ENCODE measurements at regions of chr6 and their contacts with region 1.

Region 1: DNA sequence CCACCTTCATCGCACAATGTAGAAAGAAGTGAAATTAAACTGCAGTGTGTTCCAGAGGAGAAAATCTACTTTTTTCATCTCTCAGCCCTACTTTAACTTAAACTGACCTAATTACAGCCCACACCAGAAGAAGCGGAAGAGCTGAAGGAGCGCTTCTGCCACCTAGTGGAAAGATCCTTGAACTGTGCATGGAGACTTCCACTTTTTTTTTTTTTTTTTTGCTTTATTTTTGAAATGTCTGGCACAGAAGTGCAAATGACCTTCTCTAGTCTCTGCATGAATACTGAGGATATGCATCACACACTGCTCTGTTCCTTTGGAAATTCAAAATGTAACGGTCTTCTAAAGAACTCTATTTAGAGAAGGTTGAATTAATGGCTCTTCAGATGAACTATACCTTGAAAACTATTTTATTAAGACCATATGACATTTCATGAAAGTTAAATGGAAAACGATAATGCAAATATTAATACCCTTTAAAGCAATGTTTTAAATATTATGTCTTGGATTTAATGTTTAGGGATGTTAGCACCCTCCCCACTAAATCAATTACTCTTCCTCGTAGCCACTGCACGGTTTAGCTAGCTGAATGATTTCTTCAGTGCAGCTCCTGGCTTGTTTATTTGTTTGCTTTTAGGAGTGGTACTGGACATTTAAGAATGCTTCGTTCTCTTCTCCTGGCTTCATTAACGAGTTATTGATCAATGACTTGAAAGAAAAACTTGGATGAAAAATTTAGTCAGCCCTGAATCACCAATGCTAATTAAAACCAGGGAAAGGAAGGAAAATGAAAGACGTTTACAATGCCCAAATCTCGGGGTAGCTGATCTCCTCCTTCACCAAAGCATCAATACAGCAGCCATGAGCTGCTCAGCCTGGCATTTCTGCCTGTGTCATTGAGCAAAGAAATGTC is 569.6 kb upstream of the GJE1 start:
- DNase-seq: peak; percentile 66 to 77 (median 74)
- H3K4me3 ChIP-seq: peak overlapping the region; percentile 7 to 56
- H3K4me3 Mint-ChIP-seq: peak overlapping the region; percentile 77 to 94 (median 88)
- H3K27ac ChIP-seq: no peak overlapping the region
- H3K27ac Mint-ChIP-seq: peak overlapping the region; percentile 0 to 95 (median 76)
- H3K4me1 ChIP-seq: peaks cover 5% of the 10 kb centered on the region
- H3K4me1 Mint-ChIP-seq: peaks cover 4 to 16% (median 12%) of the 10 kb centered on the region in 4 donors
- H3K27me3 ChIP-seq: no peaks in the 10 kb centered on the region
- H3K27me3 Mint-ChIP-seq: peaks cover 0 to 2% of the 10 kb centered on the region in 2 donors

Region 2: GRCh38 chr6:139881728-139882211 is 1681.3 kb before region 1 on chr6:
- CTCF ChIA-PET with region 1: no interaction called
- POLR2A ChIA-PET with region 1: no interaction called
- intact Hi-C with region 1: loop called (anchors 5 kb)
- DNase-seq: peak in 3 of 5 donors; percentile 8 to 21 (median 19)
- H3K4me3 ChIP-seq: no peak overlapping the region
- H3K4me3 Mint-ChIP-seq: no peak overlapping the region
- H3K27ac ChIP-seq: no peak overlapping the region
- H3K27ac Mint-ChIP-seq: no peak overlapping the region
- H3K4me1 ChIP-seq: no peaks in the 10 kb centered on the region
- H3K4me1 Mint-ChIP-seq: peaks cover 0 to 2% (median 0%) of the 10 kb centered on the region in 4 donors
- H3K27me3 ChIP-seq: no peaks in the 10 kb centered on the region
- H3K27me3 Mint-ChIP-seq: no peaks in the 10 kb centered on the region

Region 3: GRCh38 chr6:141229296-141229695 is 333.8 kb before region 1 on chr6:
- CTCF ChIA-PET with region 1: no interaction called
- POLR2A ChIA-PET with region 1: no interaction called
- intact Hi-C with region 1: no loop called
- DNase-seq: no peak
- H3K4me3 ChIP-seq: no peak overlapping the region
- H3K4me3 Mint-ChIP-seq: no peak overlapping the region
- H3K27ac ChIP-seq: no peak overlapping the region
- H3K27ac Mint-ChIP-seq: no peak overlapping the region
- H3K4me1 ChIP-seq: no peaks in the 10 kb centered on the region
- H3K4me1 Mint-ChIP-seq: no peaks in the 10 kb centered on the region
- H3K27me3 ChIP-seq: no peaks in the 10 kb centered on the region
- H3K27me3 Mint-ChIP-seq: peaks cover 0 to 1% of the 10 kb centered on the region in 2 donors

Region 4: GRCh38 chr6:141309295-141309694 is 253.8 kb before region 1 on chr6:
- CTCF ChIA-PET with region 1: no interaction called
- POLR2A ChIA-PET with region 1: no interaction called
- intact Hi-C with region 1: loop called (anchors 1 kb)
- DNase-seq: no peak
- H3K4me3 ChIP-seq: no peak overlapping the region
- H3K4me3 Mint-ChIP-seq: no peak overlapping the region
- H3K27ac ChIP-seq: no peak overlapping the region
- H3K27ac Mint-ChIP-seq: no peak overlapping the region
- H3K4me1 ChIP-seq: no peaks in the 10 kb centered on the region
- H3K4me1 Mint-ChIP-seq: no peaks in the 10 kb centered on the region
- H3K27me3 ChIP-seq: no peaks in the 10 kb centered on the region
- H3K27me3 Mint-ChIP-seq: peaks cover 0 to 2% of the 10 kb centered on the region in 2 donors

Region 5: GRCh38 chr6:141610736-141611135 is 47.6 kb after region 1 on chr6:
- CTCF ChIA-PET with region 1: no interaction called
- POLR2A ChIA-PET with region 1: no interaction called
- intact Hi-C with region 1: no loop called
- DNase-seq: no peak
- H3K4me3 ChIP-seq: no peak overlapping the region
- H3K4me3 Mint-ChIP-seq: no peak overlapping the region
- H3K27ac ChIP-seq: no peak overlapping the region
- H3K27ac Mint-ChIP-seq: no peak overlapping the region
- H3K4me1 ChIP-seq: no peaks in the 10 kb centered on the region
- H3K4me1 Mint-ChIP-seq: no peaks in the 10 kb centered on the region
- H3K27me3 ChIP-seq: no peaks in the 10 kb centered on the region
- H3K27me3 Mint-ChIP-seq: peaks cover 0 to 1% of the 10 kb centered on the region in 2 donors

Measured in CD4-positive, alpha-beta memory T cell (primary cell).